ENCODE measurements at regions of chrX and their contacts with region 1.

Region 1: GRCh38 chrX:129741880-129742758 is 3.3 kb downstream of the XPNPEP2 start:
- DNase-seq: no peak
- ATAC-seq: no peak
- H3K4me3 Mint-ChIP-seq: peak overlapping the region; percentile 72
- H3K27ac Mint-ChIP-seq: peak overlapping the region; percentile 98
- H3K4me1 Mint-ChIP-seq: peaks cover 52% of the 10 kb centered on the region
- H3K27me3 Mint-ChIP-seq: no peaks in the 10 kb centered on the region

Region 2: GRCh38 chrX:129654419-129655165 is 87.5 kb before region 1 on chrX and contains the start of gene APLN:
- POLR2A ChIA-PET with region 1: no interaction called
- DNase-seq: peak; percentile 47
- ATAC-seq: peak; percentile 59
- H3K4me3 Mint-ChIP-seq: peak within 1 kb of the TSS; percentile 71
- H3K27ac Mint-ChIP-seq: no peak within 1 kb of the TSS
- H3K4me1 Mint-ChIP-seq: peaks cover 8% of the 10 kb centered on the region
- H3K27me3 Mint-ChIP-seq: peaks cover 8% of the 10 kb centered on the region
- total RNA-seq, gene APLN: 1.9 to 2.4 TPM

Region 3: DNA sequence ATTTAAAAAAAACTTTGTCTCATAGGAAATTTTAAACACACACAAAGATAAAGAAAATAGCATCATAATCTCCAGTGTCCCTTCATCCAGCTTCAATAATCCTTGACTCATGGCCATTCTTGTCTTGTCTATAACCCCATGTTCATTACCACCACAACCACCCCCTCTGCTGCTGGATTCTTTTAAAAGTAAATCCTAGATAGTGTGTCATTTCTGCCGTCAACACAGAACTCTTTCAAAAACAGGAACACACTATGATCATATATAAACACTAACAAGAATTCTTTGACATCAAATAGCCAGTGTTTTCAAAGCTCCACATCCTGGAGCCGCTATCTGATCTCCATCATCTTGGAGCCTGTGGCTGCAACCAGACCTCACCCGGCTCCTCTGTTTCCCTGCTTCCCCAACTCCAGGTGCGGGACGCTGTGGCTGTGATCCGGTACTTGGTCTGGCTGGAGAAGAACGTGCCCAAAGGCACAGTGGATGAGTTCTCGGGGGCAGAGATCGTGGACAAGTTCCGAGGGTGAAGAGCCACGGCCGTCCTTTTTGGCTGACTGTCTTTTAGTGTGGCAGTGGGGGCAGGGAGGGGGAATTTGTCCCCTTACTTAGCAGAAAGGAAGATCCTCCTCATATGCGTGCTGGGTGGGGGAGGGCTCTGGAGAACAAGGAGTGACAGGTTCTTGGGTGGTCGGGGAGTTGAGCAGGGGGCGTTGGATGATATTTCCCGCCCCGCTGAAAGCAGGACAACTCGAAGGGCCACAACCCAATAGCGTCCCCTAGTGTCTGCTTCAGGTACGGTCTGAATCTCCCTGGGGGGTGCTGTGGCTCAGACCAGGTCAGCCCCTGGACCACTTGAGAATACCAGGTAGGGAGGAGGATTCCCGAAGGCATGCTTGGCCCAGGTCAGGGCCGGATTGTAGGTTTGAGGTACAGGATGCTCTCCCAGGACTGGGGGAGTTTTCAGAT is 12.2 kb after region 1 on chrX:
- POLR2A ChIA-PET with region 1: interaction called, 10 read pairs
- DNase-seq: no peak
- ATAC-seq: no peak
- H3K4me3 Mint-ChIP-seq: no peak overlapping the region
- H3K27ac Mint-ChIP-seq: peak overlapping the region; percentile 83
- H3K4me1 Mint-ChIP-seq: peaks cover 40% of the 10 kb centered on the region
- H3K27me3 Mint-ChIP-seq: no peaks in the 10 kb centered on the region

Region 4: DNA sequence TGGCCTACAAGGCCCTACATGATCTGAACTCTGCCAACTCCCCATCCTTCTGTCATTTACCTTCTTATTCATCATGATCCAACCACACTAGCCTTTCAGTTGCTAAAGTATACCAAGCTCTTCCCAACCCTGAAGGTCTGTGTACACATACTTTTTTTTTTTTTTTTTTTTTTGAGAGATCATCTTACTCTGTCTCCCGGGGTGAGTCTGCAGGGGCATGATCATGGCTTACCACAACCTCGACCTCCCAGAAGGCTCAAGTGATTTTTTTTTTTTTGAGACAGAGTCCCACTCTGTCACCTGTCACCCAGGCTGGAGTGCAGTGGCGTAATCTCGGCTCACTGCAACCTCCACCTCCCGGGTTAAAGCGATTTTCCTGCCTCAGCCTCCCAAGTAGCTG is 157.9 kb after region 1 on chrX:
- POLR2A ChIA-PET with region 1: no interaction called
- DNase-seq: no peak
- ATAC-seq: no peak
- H3K4me3 Mint-ChIP-seq: no peak overlapping the region
- H3K27ac Mint-ChIP-seq: no peak overlapping the region
- H3K4me1 Mint-ChIP-seq: no peaks in the 10 kb centered on the region
- H3K27me3 Mint-ChIP-seq: no peaks in the 10 kb centered on the region